OCI-LY7 (cell line): ENCODE measurements at regions of chr17 and their contacts with region 1.

Region 1: GRCh38 chr17:68255731-68256538 is 8.1 kb downstream of the AMZ2 start:
- DNase-seq: peak; percentile 56
- H3K4me3 ChIP-seq: peak overlapping the region; percentile 54
- H3K27ac ChIP-seq: peak overlapping the region; percentile 90
- H3K4me1 ChIP-seq: peaks cover 98% of the 10 kb centered on the region
- CTCF ChIP-seq: no peak

Region 2: GRCh38 chr17:68124873-68125870 is 130.8 kb before region 1 on chr17:
- CTCF ChIA-PET with region 1: no interaction called
- POLR2A ChIA-PET with region 1: no interaction called
- intact Hi-C with region 1: no loop called
- DNase-seq: no peak
- H3K4me3 ChIP-seq: no peak overlapping the region
- H3K27ac ChIP-seq: no peak overlapping the region
- H3K4me1 ChIP-seq: no peaks in the 10 kb centered on the region
- CTCF ChIP-seq: no peak

Region 3: DNA sequence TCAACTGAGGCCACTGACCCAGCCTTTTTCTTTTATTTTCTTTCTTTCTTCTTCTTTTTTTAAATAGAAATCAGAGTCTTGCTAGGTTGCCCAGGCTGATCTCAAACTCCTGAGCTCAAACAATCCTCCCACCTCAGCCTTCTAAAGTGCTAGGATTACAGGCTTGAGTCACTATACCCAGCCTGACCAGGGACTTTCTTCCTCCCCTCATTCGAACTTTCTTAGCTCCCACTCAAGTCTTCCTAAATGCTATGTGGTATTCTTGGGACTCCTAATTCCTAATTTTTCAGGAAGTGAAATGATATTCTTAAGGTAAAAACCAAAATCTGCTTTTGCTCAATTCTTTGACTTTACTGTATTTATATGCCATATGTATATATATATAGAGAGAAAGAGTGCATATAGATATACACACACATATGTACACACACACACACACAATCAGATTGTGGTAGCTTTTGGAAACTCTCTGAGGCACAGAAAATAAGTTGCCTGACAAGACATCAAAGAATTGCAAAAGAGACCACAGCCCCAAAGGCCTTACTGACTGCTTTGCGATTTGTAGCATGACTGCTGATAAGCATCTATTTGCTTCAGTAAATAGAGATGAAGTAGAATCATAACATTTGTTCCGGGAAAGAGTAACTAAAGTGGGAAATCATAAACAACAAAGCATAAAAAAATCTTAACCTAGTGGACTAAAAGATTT is 17.6 kb before region 1 on chr17:
- CTCF ChIA-PET with region 1: no interaction called
- POLR2A ChIA-PET with region 1: interaction called, 11 read pairs
- intact Hi-C with region 1: loop called (anchors 2 kb)
- DNase-seq: no peak
- H3K4me3 ChIP-seq: peak overlapping the region; percentile 65
- H3K27ac ChIP-seq: peak overlapping the region; percentile 96
- H3K4me1 ChIP-seq: peaks cover 85% of the 10 kb centered on the region
- CTCF ChIP-seq: no peak

Region 4: GRCh38 chr17:68327823-68328570 is 72.1 kb after region 1 on chr17:
- CTCF ChIA-PET with region 1: no interaction called
- POLR2A ChIA-PET with region 1: no interaction called
- intact Hi-C with region 1: no loop called
- DNase-seq: no peak
- H3K4me3 ChIP-seq: no peak overlapping the region
- H3K27ac ChIP-seq: no peak overlapping the region
- H3K4me1 ChIP-seq: no peaks in the 10 kb centered on the region
- CTCF ChIP-seq: peak; percentile 58